B cell (primary cell): ENCODE measurements at regions of chr10 and their contacts with region 1.

Region 1: GRCh38 chr10:80662577-80663261 is 125.0 kb downstream of the SH2D4B start:
- DNase-seq: peak; percentile 71
- ATAC-seq: peak; percentile 73
- H3K4me3 ChIP-seq: peak overlapping the region in 1 of 5 experiments; percentile 11
- H3K4me3 Mint-ChIP-seq: peak overlapping the region; percentile 27
- H3K27ac ChIP-seq: no peak overlapping the region
- H3K27ac Mint-ChIP-seq: no peak overlapping the region
- H3K4me1 ChIP-seq: peaks cover 4 to 10% of the 10 kb centered on the region in 2 donors
- H3K4me1 Mint-ChIP-seq: peaks cover 8% of the 10 kb centered on the region
- H3K27me3 ChIP-seq: peaks cover 0 to 8% (median 4%) of the 10 kb centered on the region in 4 experiments
- H3K27me3 Mint-ChIP-seq: peaks cover 34% of the 10 kb centered on the region
- CTCF ChIP-seq: peak; percentile 96

Region 2: GRCh38 chr10:80509403-80510161 is 153.1 kb before region 1 on chr10:
- CTCF ChIA-PET with region 1: no interaction called
- POLR2A ChIA-PET with region 1: no interaction called
- intact Hi-C with region 1: no loop called
- DNase-seq: no peak
- ATAC-seq: no peak
- H3K4me3 ChIP-seq: no peak overlapping the region
- H3K4me3 Mint-ChIP-seq: no peak overlapping the region
- H3K27ac ChIP-seq: no peak overlapping the region
- H3K27ac Mint-ChIP-seq: no peak overlapping the region
- H3K4me1 ChIP-seq: peaks cover 11 to 13% of the 10 kb centered on the region in 2 donors
- H3K4me1 Mint-ChIP-seq: peaks cover 11% of the 10 kb centered on the region
- H3K27me3 ChIP-seq: no peaks in the 10 kb centered on the region
- H3K27me3 Mint-ChIP-seq: no peaks in the 10 kb centered on the region
- CTCF ChIP-seq: no peak

Region 3: DNA sequence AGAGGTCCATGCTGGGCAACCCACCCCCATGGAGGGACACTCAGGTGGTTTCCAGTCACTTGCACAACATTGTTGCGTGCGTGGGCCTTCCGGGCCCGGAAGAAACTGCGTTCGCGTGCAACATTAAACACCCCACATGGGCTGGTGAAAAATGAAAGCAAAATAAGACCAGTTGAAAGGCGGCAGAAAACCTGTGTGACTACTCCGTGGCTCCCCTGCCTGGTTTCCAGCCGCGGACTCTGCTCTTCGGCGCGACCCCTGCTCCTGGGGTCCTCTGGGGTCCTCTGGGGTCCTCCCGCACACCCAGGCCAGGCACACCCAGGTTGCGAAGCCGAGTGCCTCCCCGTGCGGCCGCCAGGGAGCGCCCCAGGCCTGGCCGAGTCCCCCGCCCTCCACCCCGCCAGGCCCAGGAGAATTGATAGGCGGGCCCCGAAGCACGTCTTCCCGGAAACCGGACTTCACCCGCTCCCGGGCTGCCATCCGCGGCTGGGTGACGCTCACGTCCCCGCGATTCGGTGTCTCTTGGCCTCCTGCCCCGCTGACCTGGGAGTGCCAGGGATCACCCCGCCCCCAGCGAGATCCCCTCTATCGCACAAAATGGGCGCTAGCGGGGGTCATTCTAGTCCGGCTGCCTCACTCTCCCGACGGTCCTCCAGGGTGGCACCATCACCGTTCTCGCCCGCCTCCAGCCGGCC is 126.9 kb before region 1 on chr10:
- CTCF ChIA-PET with region 1: interaction called, 3 read pairs
- POLR2A ChIA-PET with region 1: no interaction called
- intact Hi-C with region 1: loop called (anchors 10 kb)
- DNase-seq: peak; percentile 84
- ATAC-seq: peak; percentile 87
- H3K4me3 ChIP-seq: peak overlapping the region; percentile 57 to 75 (median 63)
- H3K4me3 Mint-ChIP-seq: peak overlapping the region; percentile 90
- H3K27ac ChIP-seq: peak overlapping the region; percentile 76 to 79
- H3K27ac Mint-ChIP-seq: peak overlapping the region; percentile 94
- H3K4me1 ChIP-seq: peaks cover 19 to 38% of the 10 kb centered on the region in 2 donors
- H3K4me1 Mint-ChIP-seq: peaks cover 35% of the 10 kb centered on the region
- H3K27me3 ChIP-seq: no peaks in the 10 kb centered on the region
- H3K27me3 Mint-ChIP-seq: peaks cover 4% of the 10 kb centered on the region
- CTCF ChIP-seq: peak; percentile 87

Region 4: GRCh38 chr10:80649183-80649582 is 13.5 kb before region 1 on chr10:
- CTCF ChIA-PET with region 1: interaction called, 11 read pairs
- POLR2A ChIA-PET with region 1: interaction called, 4 read pairs
- intact Hi-C with region 1: no loop called
- DNase-seq: no peak
- ATAC-seq: no peak
- H3K4me3 ChIP-seq: no peak overlapping the region
- H3K4me3 Mint-ChIP-seq: no peak overlapping the region
- H3K27ac ChIP-seq: no peak overlapping the region
- H3K27ac Mint-ChIP-seq: no peak overlapping the region
- H3K4me1 ChIP-seq: no peaks in the 10 kb centered on the region
- H3K4me1 Mint-ChIP-seq: no peaks in the 10 kb centered on the region
- H3K27me3 ChIP-seq: peaks cover 0 to 3% (median 0%) of the 10 kb centered on the region in 4 experiments
- H3K27me3 Mint-ChIP-seq: peaks cover 18% of the 10 kb centered on the region
- CTCF ChIP-seq: no peak